ENCODE measurements at regions of chr14 and their contacts with region 1.

Region 1: GRCh38 chr14:68718023-68718995 is 74.6 kb downstream of the ZFP36L1 start:
- DNase-seq: no peak
- H3K4me3 ChIP-seq: no peak overlapping the region
- H3K4me3 Mint-ChIP-seq: no peak overlapping the region
- H3K27ac Mint-ChIP-seq: no peak overlapping the region
- H3K4me1 ChIP-seq: peaks cover 13% of the 10 kb centered on the region
- H3K4me1 Mint-ChIP-seq: peaks cover 5% of the 10 kb centered on the region
- H3K27me3 ChIP-seq: no peaks in the 10 kb centered on the region
- H3K27me3 Mint-ChIP-seq: no peaks in the 10 kb centered on the region
- CTCF ChIP-seq: peak in 1 of 2 experiments; percentile 17

Region 2: GRCh38 chr14:68663385-68664076 is 54.8 kb before region 1 on chr14:
- CTCF ChIA-PET with region 1: no interaction called
- POLR2A ChIA-PET with region 1: no interaction called
- intact Hi-C with region 1: no loop called
- DNase-seq: no peak
- H3K4me3 ChIP-seq: no peak overlapping the region
- H3K4me3 Mint-ChIP-seq: no peak overlapping the region
- H3K27ac Mint-ChIP-seq: no peak overlapping the region
- H3K4me1 ChIP-seq: peaks cover 14% of the 10 kb centered on the region
- H3K4me1 Mint-ChIP-seq: peaks cover 28% of the 10 kb centered on the region
- H3K27me3 ChIP-seq: no peaks in the 10 kb centered on the region
- H3K27me3 Mint-ChIP-seq: no peaks in the 10 kb centered on the region
- CTCF ChIP-seq: no peak

Region 3: DNA sequence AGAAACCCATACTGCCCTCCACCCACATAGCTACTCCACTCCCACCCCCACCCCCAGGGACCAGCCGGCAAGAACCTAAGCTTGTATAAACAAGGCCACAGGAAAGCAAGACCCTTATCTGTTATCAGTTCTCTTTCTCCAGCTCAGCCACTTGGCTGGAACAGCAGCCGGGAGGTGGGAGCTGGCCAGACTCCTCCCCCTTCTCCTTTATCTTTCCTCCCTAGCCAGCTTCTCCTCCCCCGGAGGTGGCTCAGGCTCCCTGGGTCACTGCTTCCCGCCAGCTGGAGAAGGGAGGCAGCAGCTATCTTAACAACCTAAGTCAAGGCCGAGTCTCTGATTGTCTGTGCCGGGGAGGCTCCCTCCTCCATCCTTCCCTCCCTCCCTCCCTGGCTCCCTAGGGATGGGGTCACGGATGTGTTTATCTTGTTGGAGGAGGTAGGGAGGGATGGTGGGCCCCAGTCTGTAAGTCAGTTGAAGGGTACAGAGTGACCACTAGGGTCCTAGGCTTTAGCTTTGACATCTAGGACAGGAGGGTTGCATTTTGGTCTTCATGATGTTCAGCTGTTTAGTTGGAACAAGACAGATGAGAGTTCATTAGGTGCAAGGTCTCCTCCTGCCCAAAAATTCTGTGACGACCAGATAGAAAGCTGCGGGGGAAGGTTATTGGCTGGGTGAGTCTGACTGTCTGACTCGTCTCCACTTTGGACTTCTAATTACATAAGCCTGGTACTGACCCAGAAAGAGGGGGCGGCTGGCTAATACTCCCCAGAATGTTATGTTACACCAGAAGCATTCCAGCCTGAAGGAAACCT is 44.9 kb after region 1 on chr14:
- CTCF ChIA-PET with region 1: interaction called, 5 read pairs
- POLR2A ChIA-PET with region 1: no interaction called
- intact Hi-C with region 1: loop called (anchors 5 kb)
- DNase-seq: peak; percentile 85 to 88
- H3K4me3 ChIP-seq: no peak overlapping the region
- H3K4me3 Mint-ChIP-seq: peak overlapping the region; percentile 43
- H3K27ac Mint-ChIP-seq: peak overlapping the region; percentile 57
- H3K4me1 ChIP-seq: peaks cover 45% of the 10 kb centered on the region
- H3K4me1 Mint-ChIP-seq: peaks cover 32% of the 10 kb centered on the region
- H3K27me3 ChIP-seq: no peaks in the 10 kb centered on the region
- H3K27me3 Mint-ChIP-seq: no peaks in the 10 kb centered on the region
- CTCF ChIP-seq: no peak

Measured in Caco-2 (cell line).